Posterior cingulate gyrus (tissue), 11 donors: ENCODE measurements at regions of chr3 and their contacts with region 1.

Region 1: DNA sequence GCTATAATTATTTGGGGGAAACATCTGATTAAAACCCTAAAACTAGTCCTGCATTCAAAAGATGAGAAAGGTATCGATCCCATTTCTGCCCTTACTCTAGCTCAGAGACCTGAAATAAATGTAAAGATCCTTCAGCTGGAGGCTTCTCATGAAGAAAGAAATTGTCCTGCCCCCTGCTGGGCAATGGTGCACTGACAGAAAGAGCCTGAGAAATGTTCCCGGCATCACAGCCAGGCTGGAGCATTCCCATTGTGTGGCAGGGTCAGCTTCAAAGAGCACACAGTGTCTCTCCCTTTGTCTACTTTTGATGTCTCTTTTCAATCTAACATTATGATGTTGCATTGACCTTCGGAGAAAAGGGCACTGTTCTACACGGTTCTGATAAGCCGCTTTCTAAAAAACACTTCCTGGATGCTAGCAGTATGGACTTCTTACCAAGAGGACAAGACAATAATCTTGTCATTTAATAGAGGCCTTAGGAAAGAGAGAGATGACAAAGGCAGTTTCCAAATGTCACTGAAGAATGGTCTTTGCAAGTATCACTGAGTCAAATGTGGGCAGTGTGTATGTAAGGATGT is 287.5 kb downstream of the MAGI1 start:
- DNase-seq: peak; percentile 51 to 96 (median 83)

Region 2: DNA sequence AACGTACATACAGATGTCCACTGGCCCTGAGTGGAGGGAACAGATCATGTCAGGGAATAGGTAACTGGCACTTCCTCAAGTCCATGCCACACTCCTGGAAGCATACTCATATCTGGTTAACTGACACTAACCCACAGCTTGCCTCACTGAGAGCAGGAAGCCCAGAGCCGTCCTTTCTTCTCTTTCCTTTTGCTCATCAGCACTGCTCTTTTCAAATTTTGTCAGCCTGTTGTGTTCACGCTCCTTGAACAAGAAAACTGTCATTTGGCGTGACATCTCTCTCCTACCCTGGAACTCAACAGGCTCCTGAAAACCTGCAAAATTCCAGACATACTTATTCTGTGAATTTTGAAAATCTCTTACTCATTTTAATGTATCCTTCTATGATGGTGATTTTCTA is 72.7 kb before region 1 on chr3:
- intact Hi-C with region 1: loop called (anchors 2 kb)
- DNase-seq: no peak